ENCODE measurements at regions of chr3 and their contacts with region 1.

Region 1: DNA sequence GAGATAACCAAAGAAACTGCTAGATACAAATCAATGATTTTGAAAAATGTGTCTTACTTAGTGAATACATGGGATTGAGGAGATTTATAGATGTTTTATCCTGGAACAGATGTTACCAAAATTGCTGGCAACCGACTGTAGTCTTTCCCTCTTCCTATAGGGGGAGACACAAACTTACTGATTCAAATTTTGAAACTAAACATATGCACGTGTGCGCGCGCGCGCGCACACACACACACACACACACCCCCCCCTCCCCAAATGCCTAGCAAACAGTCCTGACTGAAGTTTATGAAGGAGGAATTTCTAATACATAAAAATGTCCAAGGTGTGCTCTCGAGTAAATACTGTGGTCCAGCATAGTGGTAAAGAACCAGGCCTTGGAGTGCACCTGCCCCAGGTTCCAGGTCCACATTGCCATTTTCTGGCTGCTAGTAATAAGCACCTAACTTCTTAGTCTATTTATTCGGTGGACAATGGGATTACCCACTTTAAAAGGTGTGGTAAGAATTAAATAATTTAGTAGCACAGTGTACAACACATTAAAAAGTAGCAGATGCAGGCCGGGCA is 18.5 kb upstream of the C3orf62 start:
- DNase-seq: peak; percentile 48
- ATAC-seq: peak; percentile 74
- H3K4me3 Mint-ChIP-seq: no peak overlapping the region
- H3K27ac Mint-ChIP-seq: no peak overlapping the region
- H3K4me1 Mint-ChIP-seq: no peaks in the 10 kb centered on the region
- H3K27me3 Mint-ChIP-seq: no peaks in the 10 kb centered on the region
- CTCF ChIP-seq: peak; percentile 86

Region 2: GRCh38 chr3:49445381-49445780 is 149.8 kb after region 1 on chr3:
- CTCF ChIA-PET with region 1: interaction called, 8 read pairs
- POLR2A ChIA-PET with region 1: no interaction called
- intact Hi-C with region 1: loop called (anchors 2 kb)
- DNase-seq: no peak
- ATAC-seq: no peak
- H3K4me3 Mint-ChIP-seq: no peak overlapping the region
- H3K27ac Mint-ChIP-seq: no peak overlapping the region
- H3K4me1 Mint-ChIP-seq: peaks cover 11% of the 10 kb centered on the region
- H3K27me3 Mint-ChIP-seq: no peaks in the 10 kb centered on the region
- CTCF ChIP-seq: no peak